ENCODE measurements at regions of chr18 and their contacts with region 1.

Region 1: GRCh38 chr18:51425889-51426288 is 228.4 kb upstream of the MEX3C start:
- DNase-seq: peak in 1 of 2 donors; percentile 13
- ATAC-seq: no peak
- H3K4me3 ChIP-seq: no peak overlapping the region
- H3K27ac ChIP-seq: no peak overlapping the region
- H3K4me1 ChIP-seq: no peaks in the 10 kb centered on the region
- H3K27me3 ChIP-seq: peaks cover 0 to 2% (median 0%) of the 10 kb centered on the region in 3 donors
- CTCF ChIP-seq: no peak

Region 2: GRCh38 chr18:51447351-51448342 is 21.8 kb after region 1 on chr18:
- intact Hi-C with region 1: loop called in 1 of 2 experiments (anchors 2 kb)
- DNase-seq: peak; percentile 40 to 79
- ATAC-seq: peak; percentile 87 to 97 (median 93)
- H3K4me3 ChIP-seq: no peak overlapping the region
- H3K27ac ChIP-seq: peak overlapping the region; percentile 62
- H3K4me1 ChIP-seq: peaks cover 10% of the 10 kb centered on the region
- H3K27me3 ChIP-seq: peaks cover 0 to 2% (median 0%) of the 10 kb centered on the region in 3 donors
- CTCF ChIP-seq: no peak

Measured in psoas muscle (tissue), 8 donors.